ENCODE measurements at regions of chr17 and their contacts with region 1.

Region 1: GRCh38 chr17:7862692-7863437 is 5.1 kb downstream of the CYB5D1 start:
- DNase-seq: peak; percentile 74
- H3K4me3 ChIP-seq: no peak overlapping the region
- H3K27ac ChIP-seq: no peak overlapping the region
- H3K4me1 ChIP-seq: peaks cover 0 to 20% (median 14%) of the 10 kb centered on the region in 4 donors
- H3K27me3 ChIP-seq: no peaks in the 10 kb centered on the region
- CTCF ChIP-seq: peak; percentile 75 to 87 (median 83)
- EP300 ChIP-seq: no peak
- POLR2A ChIP-seq: no peak

Region 2: DNA sequence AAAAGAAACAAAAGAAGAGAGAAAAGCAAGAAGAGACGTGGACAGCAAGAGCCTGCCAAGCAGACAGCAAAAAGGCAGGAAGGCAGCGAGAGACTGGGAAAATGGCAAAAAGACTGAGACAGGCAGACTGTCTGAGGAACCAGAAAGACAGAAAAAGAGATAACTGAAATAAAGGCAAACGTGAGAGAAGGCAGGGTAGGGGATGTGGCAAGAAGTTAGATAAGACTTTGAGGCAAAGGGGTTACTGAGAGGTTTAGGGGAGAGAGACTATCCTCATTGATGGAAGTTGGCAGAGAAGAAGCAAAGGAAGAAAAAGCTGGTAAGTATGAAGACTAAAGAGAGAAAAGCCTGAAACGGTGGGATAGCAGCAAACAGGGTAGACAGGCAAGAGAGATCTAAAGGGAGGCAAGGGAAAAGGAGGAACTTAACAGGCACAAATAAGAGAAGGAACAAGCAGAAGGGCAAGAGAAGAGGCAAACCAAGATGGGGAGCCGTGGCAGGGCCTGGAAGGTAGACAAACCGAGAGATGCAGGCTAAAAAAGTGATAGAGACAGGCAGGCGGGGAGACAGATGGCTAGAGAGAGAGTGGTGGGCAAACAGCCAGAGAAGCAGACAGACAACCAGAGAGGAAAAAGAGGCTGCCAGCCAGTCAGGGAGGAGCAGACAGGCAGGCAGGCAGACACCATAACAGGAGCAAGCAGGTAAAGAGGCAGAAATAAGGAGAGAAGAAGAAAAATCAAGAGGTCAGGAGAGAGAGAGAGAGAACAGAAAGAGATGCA is 18.6 kb after region 1 on chr17:
- intact Hi-C with region 1: loop called (anchors 2 kb)
- DNase-seq: no peak
- H3K4me3 ChIP-seq: no peak overlapping the region
- H3K27ac ChIP-seq: peak overlapping the region in 3 of 4 donors; percentile 22 to 93 (median 49)
- H3K4me1 ChIP-seq: peaks cover 0 to 40% (median 39%) of the 10 kb centered on the region in 4 donors
- H3K27me3 ChIP-seq: no peaks in the 10 kb centered on the region
- CTCF ChIP-seq: no peak
- EP300 ChIP-seq: no peak
- POLR2A ChIP-seq: no peak

Region 3: DNA sequence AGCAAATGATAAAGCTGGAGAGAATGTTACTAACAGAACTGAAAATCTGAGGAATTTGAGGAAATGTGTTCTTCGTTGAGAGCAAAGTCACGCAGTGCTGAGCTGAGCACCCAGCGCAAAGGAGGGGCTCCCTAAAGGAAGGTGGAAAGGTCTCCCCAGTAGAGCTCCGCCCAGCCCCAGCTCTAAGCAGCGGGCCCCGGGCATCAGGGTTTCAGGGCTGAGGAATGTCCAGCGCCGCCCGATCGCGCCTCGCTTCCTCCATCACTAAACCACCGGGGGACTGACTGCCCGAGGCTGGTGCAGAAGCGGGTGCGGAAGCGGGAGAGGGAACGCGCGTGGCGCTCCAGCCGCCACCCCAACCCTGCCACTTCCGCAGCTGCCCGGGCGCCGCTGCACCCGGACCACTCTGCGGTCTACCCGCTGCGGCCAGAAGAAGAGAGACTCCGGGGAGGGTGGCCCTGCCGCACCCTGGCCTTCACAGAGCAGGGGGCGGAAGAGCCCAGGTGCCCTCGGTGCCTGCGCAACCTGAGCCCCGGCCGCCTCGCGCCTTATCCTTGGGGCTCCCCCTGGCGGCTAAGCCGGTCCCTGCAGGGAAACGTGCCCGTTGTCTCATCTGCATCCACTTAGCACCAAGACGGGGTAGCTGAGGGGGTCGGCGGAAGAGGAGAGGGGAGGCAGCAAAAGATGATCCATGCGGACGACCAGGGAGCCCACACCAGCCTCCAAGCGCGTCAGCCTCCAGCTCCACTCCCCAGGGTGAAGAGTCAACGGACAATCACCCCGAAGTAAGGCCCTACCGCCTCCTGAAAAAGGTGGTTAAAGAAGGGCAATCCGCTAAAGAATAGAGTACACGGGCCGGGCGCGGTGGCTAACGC is 127.2 kb after region 1 on chr17:
- intact Hi-C with region 1: loop called (anchors 1 kb)
- DNase-seq: peak; percentile 90
- H3K4me3 ChIP-seq: peak overlapping the region; percentile 33 to 59 (median 52)
- H3K27ac ChIP-seq: peak overlapping the region; percentile 9 to 62 (median 20)
- H3K4me1 ChIP-seq: peaks cover 0 to 12% (median 8%) of the 10 kb centered on the region in 4 donors
- H3K27me3 ChIP-seq: peaks cover 0 to 7% (median 0%) of the 10 kb centered on the region in 3 donors
- CTCF ChIP-seq: peak; percentile 90 to 98 (median 94)
- EP300 ChIP-seq: no peak
- POLR2A ChIP-seq: no peak

Region 4: GRCh38 chr17:8057691-8058114 is 194.8 kb after region 1 on chr17:
- intact Hi-C with region 1: loop called (anchors 5 kb)
- DNase-seq: peak; percentile 72
- H3K4me3 ChIP-seq: no peak overlapping the region
- H3K27ac ChIP-seq: no peak overlapping the region
- H3K4me1 ChIP-seq: peaks cover 0 to 9% (median 6%) of the 10 kb centered on the region in 4 donors
- H3K27me3 ChIP-seq: peaks cover 11 to 70% (median 49%) of the 10 kb centered on the region in 3 donors
- CTCF ChIP-seq: peak; percentile 50 to 72 (median 66)
- EP300 ChIP-seq: no peak
- POLR2A ChIP-seq: no peak

Measured in sigmoid colon (tissue), 7 donors.